ENCODE measurements at regions of chr2 and their contacts with region 1.

Region 1: DNA sequence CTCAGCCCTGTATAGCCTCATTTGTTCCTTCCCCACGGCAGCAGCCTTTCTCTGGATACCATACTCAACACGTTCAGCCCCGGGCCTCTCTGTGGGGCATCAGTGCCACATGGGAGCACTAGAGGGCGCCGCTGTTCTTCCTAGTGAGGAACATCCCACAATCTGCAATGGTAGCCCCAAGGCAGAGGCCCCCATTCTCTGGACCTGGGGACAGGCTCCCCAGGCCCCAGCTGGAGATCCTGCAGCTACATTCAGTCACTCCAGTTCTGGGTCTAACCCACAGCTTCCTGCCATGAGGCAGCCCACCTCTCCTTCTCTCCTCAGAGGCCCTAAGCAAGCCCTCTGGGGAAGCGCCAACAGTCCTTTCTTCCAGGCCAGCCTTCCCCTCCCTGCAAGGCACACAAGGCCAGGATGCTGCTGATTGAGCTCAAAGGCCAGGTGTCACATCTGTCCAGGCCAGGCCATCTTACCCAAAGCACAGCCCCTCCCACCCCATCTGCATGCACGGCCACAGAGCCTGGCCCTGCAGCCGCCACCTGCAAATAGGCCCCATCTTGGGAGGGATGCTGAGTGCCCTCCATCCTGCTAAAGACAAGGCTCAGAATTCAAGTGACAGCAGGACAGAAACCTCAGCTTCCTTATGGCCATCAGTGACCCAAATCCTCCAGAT is 14.3 kb upstream of the SFXN5 start:
- DNase-seq: peak; percentile 88
- ATAC-seq: peak; percentile 89
- H3K4me3 Mint-ChIP-seq: no peak overlapping the region
- H3K27ac Mint-ChIP-seq: no peak overlapping the region
- H3K4me1 Mint-ChIP-seq: no peaks in the 10 kb centered on the region
- H3K27me3 Mint-ChIP-seq: no peaks in the 10 kb centered on the region

Region 2: GRCh38 chr2:73006969-73007710 is 78.7 kb before region 1 on chr2:
- CTCF ChIA-PET with region 1: no interaction called
- POLR2A ChIA-PET with region 1: no interaction called
- DNase-seq: no peak
- ATAC-seq: no peak
- H3K4me3 Mint-ChIP-seq: no peak overlapping the region
- H3K27ac Mint-ChIP-seq: no peak overlapping the region
- H3K4me1 Mint-ChIP-seq: no peaks in the 10 kb centered on the region
- H3K27me3 Mint-ChIP-seq: peaks cover 2% of the 10 kb centered on the region

Region 3: GRCh38 chr2:73071360-73072133 is 14.3 kb before region 1 on chr2 and contains the start of gene SFXN5:
- CTCF ChIA-PET with region 1: interaction called, 22 read pairs
- POLR2A ChIA-PET with region 1: no interaction called
- DNase-seq: peak; percentile 96
- ATAC-seq: peak; percentile 92
- H3K4me3 Mint-ChIP-seq: peak within 1 kb of the TSS; percentile 79
- H3K27ac Mint-ChIP-seq: peak within 1 kb of the TSS; percentile 85
- H3K4me1 Mint-ChIP-seq: peaks cover 28% of the 10 kb centered on the region
- H3K27me3 Mint-ChIP-seq: no peaks in the 10 kb centered on the region
- total RNA-seq, gene SFXN5: 15.7 to 18.6 TPM

Region 4: DNA sequence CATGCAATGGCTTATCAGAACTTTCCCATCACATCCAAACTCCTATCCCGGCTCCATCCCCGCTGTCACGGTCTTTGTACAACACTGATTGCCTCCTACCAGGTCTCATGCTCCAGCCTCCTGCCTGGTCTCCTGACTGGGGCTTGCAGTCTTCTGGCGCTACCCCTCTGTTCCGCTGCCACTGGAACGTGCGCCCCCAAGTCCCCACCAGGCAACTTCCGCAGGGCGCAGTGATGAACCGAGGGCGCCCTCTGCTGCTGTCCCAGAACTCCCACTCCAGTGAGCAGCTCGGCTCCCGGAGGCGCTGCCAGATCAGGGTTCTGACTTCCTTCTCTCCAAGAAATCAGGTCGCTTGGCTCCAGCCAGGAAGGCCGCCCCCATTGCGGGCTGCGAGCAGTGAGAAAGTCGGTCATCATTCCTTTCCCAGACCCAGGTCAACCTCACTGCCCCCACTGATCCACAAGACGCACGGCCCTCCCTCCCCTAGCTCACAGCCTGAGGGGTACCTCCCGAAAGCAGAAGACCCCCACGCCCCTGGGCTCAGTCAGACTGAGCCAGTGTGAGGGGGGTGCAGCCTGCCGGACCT is 70.8 kb after region 1 on chr2:
- CTCF ChIA-PET with region 1: interaction called, 25 read pairs
- POLR2A ChIA-PET with region 1: no interaction called
- DNase-seq: peak; percentile 52
- ATAC-seq: peak; percentile 72
- H3K4me3 Mint-ChIP-seq: no peak overlapping the region
- H3K27ac Mint-ChIP-seq: no peak overlapping the region
- H3K4me1 Mint-ChIP-seq: peaks cover 4% of the 10 kb centered on the region
- H3K27me3 Mint-ChIP-seq: peaks cover 39% of the 10 kb centered on the region

Region 5: GRCh38 chr2:73163483-73164367 is 77.9 kb after region 1 on chr2:
- CTCF ChIA-PET with region 1: interaction called, 17 read pairs
- POLR2A ChIA-PET with region 1: no interaction called
- DNase-seq: peak; percentile 69
- ATAC-seq: peak; percentile 83
- H3K4me3 Mint-ChIP-seq: no peak overlapping the region
- H3K27ac Mint-ChIP-seq: no peak overlapping the region
- H3K4me1 Mint-ChIP-seq: no peaks in the 10 kb centered on the region
- H3K27me3 Mint-ChIP-seq: peaks cover 11% of the 10 kb centered on the region

Measured in activated CD8-positive, alpha-beta T cell treated with anti-CD3 and anti-CD28 coated beads, Interleukin-2, amount 10 ng/mL, durations not matched to agents 7 days and 5 days (primary cell).